CD8-positive, alpha-beta memory T cell (primary cell): ENCODE measurements at regions of chr3 and their contacts with region 1.

Region 1: DNA sequence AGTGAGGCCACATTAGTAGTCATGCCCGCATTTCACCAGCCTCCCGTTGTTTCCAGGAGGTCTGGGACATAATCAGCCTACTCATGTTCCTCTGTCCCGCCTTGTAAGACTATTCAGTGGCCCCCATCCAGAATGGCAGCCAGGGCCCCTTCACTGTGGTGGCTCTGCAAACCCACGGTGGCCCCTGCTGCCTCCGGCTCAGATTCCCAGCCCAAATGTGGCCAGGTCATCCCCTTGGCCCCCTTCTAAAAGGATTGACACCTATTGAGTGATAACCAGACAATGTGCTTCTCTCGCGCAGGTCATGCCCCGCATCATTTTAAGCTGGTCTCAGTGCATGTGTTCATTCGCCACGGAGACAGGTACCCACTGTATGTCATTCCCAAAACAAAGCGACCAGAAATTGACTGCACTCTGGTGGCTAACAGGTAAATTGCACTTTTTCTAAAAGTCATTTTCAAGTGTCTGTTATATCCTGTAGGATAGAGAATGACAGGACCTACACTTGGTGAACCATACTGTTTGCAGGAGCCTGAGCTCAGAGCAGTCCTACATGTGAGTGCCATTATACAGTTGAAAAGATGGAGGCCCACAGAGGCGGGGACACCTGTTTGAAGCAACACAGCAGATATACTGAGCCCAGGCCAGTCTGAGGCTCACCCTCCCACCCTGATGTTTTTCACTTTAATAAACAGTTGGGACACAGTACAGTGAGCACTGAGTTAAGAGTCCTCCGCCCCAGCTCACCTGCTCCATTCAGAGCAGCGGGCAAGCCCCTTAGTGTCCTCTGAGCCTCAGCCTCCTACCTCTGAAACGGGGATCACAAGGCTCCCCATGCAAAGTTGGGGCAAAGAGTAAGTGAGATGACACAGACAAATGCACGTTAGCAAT is 47.7 kb downstream of the PXYLP1 start:
- DNase-seq: peak in 2 of 5 donors; percentile 18 to 39
- H3K4me3 ChIP-seq: no peak overlapping the region
- H3K4me3 Mint-ChIP-seq: peak overlapping the region in 1 of 7 donors; percentile 66
- H3K27ac ChIP-seq: no peak overlapping the region
- H3K27ac Mint-ChIP-seq: peak overlapping the region in 6 of 8 donors; percentile 8 to 70 (median 60)
- H3K4me1 ChIP-seq: peaks cover 19% of the 10 kb centered on the region
- H3K4me1 Mint-ChIP-seq: peaks cover 20 to 25% (median 21%) of the 10 kb centered on the region in 3 donors
- H3K27me3 ChIP-seq: no peaks in the 10 kb centered on the region
- H3K27me3 Mint-ChIP-seq: no peaks in the 10 kb centered on the region

Region 2: DNA sequence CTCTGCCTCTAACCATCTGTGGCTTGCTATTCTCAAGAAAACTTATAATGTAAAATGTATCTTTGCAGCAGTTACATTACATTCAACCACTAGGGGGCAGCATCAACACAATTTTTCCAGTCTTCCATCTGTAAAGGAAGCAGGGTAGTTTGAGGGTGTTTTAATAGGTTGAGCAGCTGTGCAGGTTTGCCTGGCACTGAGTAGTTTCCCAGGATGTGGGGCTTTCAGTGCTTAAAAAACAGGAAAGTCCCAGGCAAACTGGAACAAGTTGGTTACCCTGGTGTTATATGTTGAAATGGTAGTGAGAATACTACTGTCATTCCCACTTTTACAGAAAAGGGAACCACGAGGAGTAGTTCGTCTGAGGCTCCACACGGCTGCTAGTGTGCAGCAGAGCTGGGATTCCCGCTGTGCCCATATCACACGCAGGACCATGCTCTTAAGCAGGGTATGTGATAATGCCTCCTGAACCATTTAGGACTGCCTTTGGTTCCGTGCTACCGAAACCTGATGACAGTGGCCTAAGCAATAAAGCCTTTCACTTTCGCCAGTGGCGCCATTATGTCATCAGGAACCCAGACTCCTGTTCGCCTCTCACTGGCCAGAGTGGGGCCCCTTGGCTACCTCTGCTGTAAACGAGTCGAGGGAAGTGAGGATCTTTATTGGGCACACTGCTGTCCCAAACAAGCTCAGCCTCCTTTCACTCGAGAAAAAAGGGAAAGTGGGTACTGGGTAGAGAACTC is 24.3 kb after region 1 on chr3:
- CTCF ChIA-PET with region 1: interaction called, 10 read pairs
- POLR2A ChIA-PET with region 1: no interaction called
- DNase-seq: peak; percentile 38 to 70 (median 66)
- H3K4me3 ChIP-seq: no peak overlapping the region
- H3K4me3 Mint-ChIP-seq: peak overlapping the region in 1 of 7 donors; percentile 10
- H3K27ac ChIP-seq: no peak overlapping the region
- H3K27ac Mint-ChIP-seq: no peak overlapping the region
- H3K4me1 ChIP-seq: peaks cover 41% of the 10 kb centered on the region
- H3K4me1 Mint-ChIP-seq: peaks cover 24 to 36% (median 34%) of the 10 kb centered on the region in 3 donors
- H3K27me3 ChIP-seq: no peaks in the 10 kb centered on the region
- H3K27me3 Mint-ChIP-seq: no peaks in the 10 kb centered on the region